ENCODE measurements at regions of chr2 and their contacts with region 1.

Region 1: GRCh38 chr2:172096626-172097547 is 5.8 kb downstream of the DLX2 start:
- DNase-seq: no peak
- ATAC-seq: peak; percentile 25; the same call in 1 of the 2 replicates
- H3K4me3 ChIP-seq: peak overlapping the region; percentile 56 to 67
- H3K27ac ChIP-seq: peak overlapping the region; percentile 82
- H3K4me1 ChIP-seq: peaks cover 38% of the 10 kb centered on the region
- H3K27me3 ChIP-seq: no peaks in the 10 kb centered on the region; the same call in 1 of the 2 replicates
- CTCF ChIP-seq: no peak

Region 2: DNA sequence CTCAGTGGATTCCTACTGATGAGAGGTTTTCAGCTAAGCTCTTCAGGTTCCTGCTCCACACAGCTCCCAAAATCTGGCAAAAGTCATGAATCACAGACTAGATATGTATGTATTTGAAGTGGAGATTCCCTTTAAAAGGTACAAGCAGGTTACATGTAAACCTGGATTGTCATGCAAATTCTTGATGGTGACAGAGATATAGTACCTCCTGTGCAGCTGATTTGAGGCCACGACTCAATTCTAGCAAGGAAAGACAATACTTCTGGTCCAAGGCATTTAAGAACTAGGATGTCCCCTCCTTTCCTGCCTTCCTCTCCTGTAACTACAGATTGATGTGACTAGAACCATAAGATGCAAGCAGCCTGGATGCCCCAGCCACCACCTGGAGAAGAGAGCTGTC is 1112.8 kb before region 1 on chr2:
- CTCF ChIA-PET with region 1: no interaction called
- POLR2A ChIA-PET with region 1: interaction called, 11 read pairs
- in situ Hi-C with region 1: no loop called
- intact Hi-C with region 1: no loop called
- DNase-seq: no peak
- ATAC-seq: peak; percentile 43; the same call in 1 of the 2 replicates
- H3K4me3 ChIP-seq: no peak overlapping the region
- H3K27ac ChIP-seq: no peak overlapping the region
- H3K4me1 ChIP-seq: no peaks in the 10 kb centered on the region
- H3K27me3 ChIP-seq: no peaks in the 10 kb centered on the region
- CTCF ChIP-seq: no peak

Region 3: GRCh38 chr2:171972329-171972982 is 124.4 kb before region 1 on chr2:
- CTCF ChIA-PET with region 1: no interaction called
- POLR2A ChIA-PET with region 1: no interaction called
- in situ Hi-C with region 1: no loop called
- intact Hi-C with region 1: no loop called
- DNase-seq: no peak
- ATAC-seq: 0 out of 2 replicates have a peak, but pooled peaks have one; percentile 38
- H3K4me3 ChIP-seq: no peak overlapping the region
- H3K27ac ChIP-seq: no peak overlapping the region
- H3K4me1 ChIP-seq: no peaks in the 10 kb centered on the region
- H3K27me3 ChIP-seq: no peaks in the 10 kb centered on the region
- CTCF ChIP-seq: no peak

Measured in Panc1 (cell line).